Motor neuron (in vitro differentiated cells): ENCODE measurements at regions of chr19 and their contacts with region 1.

Region 1: GRCh38 chr19:35879770-35880317 is 11.5 kb downstream of the APLP1 start:
- ATAC-seq: peak; percentile 87 to 98 (median 93)
- H3K4me3 ChIP-seq: no peak overlapping the region
- H3K27ac ChIP-seq: no peak overlapping the region
- H3K4me1 ChIP-seq: peaks cover 9 to 10% of the 10 kb centered on the region in 2 donors

Region 2: GRCh38 chr19:35404879-35405622 is 474.8 kb before region 1 on chr19:
- in situ Hi-C with region 1: no loop called
- ATAC-seq: peak; percentile 29 to 99 (median 68)
- H3K4me3 ChIP-seq: no peak overlapping the region
- H3K27ac ChIP-seq: no peak overlapping the region
- H3K4me1 ChIP-seq: no peaks in the 10 kb centered on the region

Region 3: DNA sequence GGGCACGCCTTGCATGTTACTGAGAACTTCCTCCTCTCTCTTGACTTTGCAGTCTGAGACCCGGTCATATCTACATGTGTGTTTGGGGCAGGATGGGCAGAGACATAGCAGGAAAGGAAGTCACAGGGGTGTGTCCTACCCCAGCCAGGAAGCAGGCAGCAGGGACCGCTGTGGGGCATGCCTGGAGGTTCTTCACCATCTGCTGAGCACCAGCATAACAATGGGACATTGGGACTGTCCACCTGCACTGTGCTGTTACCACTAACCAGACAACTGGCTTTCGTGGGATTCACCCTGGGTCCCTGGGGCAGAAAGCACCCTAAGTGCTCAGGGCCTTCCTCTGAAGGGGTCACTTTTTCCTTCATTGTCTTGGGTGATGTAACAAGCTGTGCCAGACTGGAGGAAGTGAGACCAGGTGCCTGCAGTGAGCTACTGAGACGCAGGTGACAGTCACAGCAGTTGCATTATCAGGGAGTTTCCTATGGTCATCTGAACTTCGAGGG is 269.9 kb before region 1 on chr19:
- in situ Hi-C with region 1: no loop called
- ATAC-seq: no peak
- H3K4me3 ChIP-seq: no peak overlapping the region
- H3K27ac ChIP-seq: no peak overlapping the region
- H3K4me1 ChIP-seq: peaks cover 2 to 5% of the 10 kb centered on the region in 2 donors

Region 4: DNA sequence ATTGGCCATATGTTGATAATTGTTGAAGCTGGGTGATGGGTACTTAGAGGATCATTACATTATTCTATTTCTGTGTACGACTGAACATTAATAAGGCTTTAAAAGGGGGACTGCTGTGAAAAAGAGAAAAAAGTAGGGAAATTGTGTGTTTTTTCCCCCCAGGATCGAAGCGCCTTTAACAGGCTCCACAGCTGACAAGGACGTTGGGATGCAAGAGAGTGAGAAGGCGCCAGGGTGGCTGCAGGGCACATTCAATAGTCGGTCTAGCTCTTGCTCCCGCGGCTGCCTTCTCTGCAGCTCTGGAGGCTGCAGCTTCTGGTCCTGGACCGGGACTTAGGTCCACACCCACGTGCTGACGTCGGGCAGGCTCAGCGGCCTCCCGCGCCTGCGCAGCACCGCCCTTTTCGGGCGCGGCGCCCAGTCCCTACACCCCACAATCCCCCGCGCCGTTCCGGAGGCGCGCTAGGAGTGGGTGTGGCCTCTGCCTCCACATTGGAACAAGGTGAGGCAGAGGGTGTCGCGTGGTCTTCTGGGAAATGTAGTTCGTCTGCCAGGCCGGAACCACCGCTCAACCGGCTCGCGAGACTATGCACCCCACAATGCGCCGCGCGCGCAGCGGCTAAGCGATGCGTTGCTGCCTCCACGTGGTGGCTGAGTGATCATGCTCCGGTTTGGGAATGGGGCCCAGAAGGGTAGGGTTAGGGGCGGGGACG is 51.5 kb after region 1 on chr19:
- in situ Hi-C with region 1: loop called in 1 of 9 experiments (anchors 10 kb)
- ATAC-seq: peak; percentile 93 to 97 (median 96)
- H3K4me3 ChIP-seq: peak overlapping the region; percentile 32 to 38 (median 37)
- H3K27ac ChIP-seq: peak overlapping the region; percentile 73 to 79
- H3K4me1 ChIP-seq: peaks cover 7 to 8% of the 10 kb centered on the region in 2 donors

Region 5: GRCh38 chr19:35995048-35995993 is 115.5 kb after region 1 on chr19 and contains the start of gene SDHAF1:
- in situ Hi-C with region 1: no loop called
- ATAC-seq: peak; percentile 85 to 96 (median 96)
- H3K4me3 ChIP-seq: peak within 1 kb of the TSS; percentile 53 to 92 (median 62)
- H3K27ac ChIP-seq: peak within 1 kb of the TSS; percentile 56 to 70
- H3K4me1 ChIP-seq: peaks cover 8 to 11% of the 10 kb centered on the region in 2 donors
- total RNA-seq, gene SDHAF1: 10.6 to 23.5 (median 18.1) TPM

Region 6: GRCh38 chr19:36081385-36081784 is 201.5 kb after region 1 on chr19:
- in situ Hi-C with region 1: no loop called
- ATAC-seq: no peak
- H3K4me3 ChIP-seq: no peak overlapping the region
- H3K27ac ChIP-seq: no peak overlapping the region
- H3K4me1 ChIP-seq: no peaks in the 10 kb centered on the region